PC-9 (cell line): ENCODE measurements at regions of chr5 and their contacts with region 1.

Region 1: GRCh38 chr5:53087621-53088121 is 21.9 kb downstream of the MOCS2 start:
- DNase-seq: no peak
- H3K4me3 ChIP-seq: no peak overlapping the region
- H3K27ac ChIP-seq: no peak overlapping the region
- H3K4me1 ChIP-seq: peaks cover 11% of the 10 kb centered on the region; the same call in 1 of the 2 replicates
- H3K27me3 ChIP-seq: no peaks in the 10 kb centered on the region
- CTCF ChIP-seq: no peak

Region 2: DNA sequence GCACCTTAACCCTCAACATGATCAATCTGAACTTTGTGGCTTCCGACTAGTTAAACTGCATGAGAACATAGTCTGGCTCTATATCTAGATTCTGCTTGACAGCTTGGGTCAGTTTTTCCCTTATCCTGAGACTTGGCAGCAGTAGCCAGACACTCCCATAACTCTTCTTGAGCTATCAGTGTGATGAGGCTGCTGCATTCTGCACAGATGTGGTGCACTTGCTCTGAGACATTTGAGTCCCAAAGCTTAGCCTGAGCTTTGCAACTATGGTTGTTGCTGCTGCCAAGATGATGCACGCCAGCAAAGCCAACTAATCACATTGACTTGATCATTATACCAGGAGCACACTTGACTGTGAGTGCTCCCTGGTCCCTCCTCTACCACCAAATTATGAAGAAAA is 14.3 kb before region 1 on chr5:
- CTCF ChIA-PET with region 1: no interaction called
- POLR2A ChIA-PET with region 1: interaction called, 17 read pairs
- intact Hi-C with region 1: no loop called
- DNase-seq: no peak
- H3K4me3 ChIP-seq: no peak overlapping the region
- H3K27ac ChIP-seq: no peak overlapping the region
- H3K4me1 ChIP-seq: no peaks in the 10 kb centered on the region
- H3K27me3 ChIP-seq: no peaks in the 10 kb centered on the region
- CTCF ChIP-seq: no peak